H1 (cell line): ENCODE measurements at regions of chr6 and their contacts with region 1.

Region 1: DNA sequence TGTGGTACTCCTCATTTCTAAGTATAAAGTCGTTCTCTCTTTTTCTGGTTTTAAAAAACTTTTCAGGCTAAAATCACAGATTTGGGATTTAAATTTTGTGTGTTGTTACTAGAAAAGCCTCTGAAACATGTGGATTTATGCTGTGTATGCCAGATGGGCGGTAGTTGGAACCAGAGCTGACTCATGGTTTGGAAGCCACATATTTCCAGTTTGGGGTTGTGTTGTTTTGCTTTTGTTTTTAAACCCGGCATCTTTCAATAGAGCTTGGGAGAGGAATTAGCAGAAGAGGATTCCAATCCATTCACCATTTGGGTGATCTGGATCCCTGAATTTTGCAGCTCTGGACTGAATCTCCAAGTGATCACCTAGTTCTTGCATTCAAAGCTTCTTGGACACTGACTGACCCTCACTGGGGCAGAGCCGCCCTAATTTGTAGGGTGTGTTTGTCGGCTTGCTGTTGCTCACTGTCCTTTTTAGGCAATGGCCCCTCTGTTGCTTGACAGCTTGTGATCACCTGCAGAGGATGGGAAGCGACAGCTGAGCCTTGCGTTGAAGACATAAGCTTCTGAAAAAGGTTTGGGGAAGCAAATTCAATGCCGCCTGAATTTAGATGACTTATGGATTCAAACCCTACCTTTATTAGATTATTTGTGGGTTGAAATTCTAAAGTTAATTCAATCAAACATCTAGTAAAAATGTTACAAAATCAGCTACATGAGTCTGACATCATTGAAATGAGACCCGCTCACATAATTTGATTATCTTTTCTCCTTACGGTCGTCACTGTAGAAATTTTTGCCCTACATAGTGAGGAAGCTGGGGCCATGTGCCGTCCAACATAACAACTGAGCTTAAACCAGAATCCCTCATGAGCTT is 79.9 kb upstream of the CD83 start:
- DNase-seq: no peak
- H3K4me3 ChIP-seq: no peak overlapping the region
- H3K27ac ChIP-seq: no peak overlapping the region
- H3K4me1 ChIP-seq: peaks cover 2 to 11% (median 6%) of the 10 kb centered on the region in 4 experiments; a peak in 5 of 7 replicates
- H3K27me3 ChIP-seq: no peaks in the 10 kb centered on the region
- CTCF ChIP-seq: no peak
- EP300 ChIP-seq: no peak
- POLR2A ChIP-seq: no peak
- RAD21 ChIP-seq: no peak

Region 2: DNA sequence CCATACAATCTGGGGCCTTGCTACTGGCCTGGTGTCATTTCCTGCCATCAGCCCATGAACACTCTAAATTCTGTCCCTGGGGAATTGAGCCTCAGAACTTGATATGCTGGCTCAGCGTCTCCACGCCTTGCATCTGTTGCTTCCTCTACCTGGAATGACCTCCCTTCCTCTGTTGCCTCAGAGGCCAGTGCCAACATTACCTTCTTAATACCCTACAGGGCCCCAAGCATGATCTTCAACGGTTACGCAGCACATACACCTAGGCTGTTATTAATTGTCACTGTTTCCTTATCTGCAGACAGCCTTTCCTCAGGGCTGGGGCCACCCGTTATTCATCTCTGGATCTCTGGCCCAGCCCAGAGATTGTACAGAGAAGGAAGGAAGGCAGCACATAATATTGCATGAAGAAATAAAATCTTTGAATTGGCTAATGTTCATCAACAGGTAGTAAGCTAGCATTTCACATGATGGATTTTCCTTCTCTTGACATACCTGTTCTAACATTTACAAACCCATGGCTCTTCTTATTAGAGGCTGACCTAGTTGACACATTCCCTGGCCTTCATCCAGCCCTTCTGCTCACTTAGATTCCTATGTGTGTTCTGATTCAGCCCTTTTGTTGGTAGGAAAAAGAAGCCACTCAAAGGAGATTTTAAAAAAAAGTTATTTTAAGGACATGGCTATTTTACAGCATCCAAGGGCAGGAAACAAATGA is 121.3 kb before region 1 on chr6:
- CTCF ChIA-PET with region 1: interaction called, 133 read pairs
- POLR2A ChIA-PET with region 1: no interaction called
- DNase-seq: no peak
- H3K4me3 ChIP-seq: no peak overlapping the region
- H3K27ac ChIP-seq: no peak overlapping the region
- H3K4me1 ChIP-seq: peaks cover 0 to 16% (median 4%) of the 10 kb centered on the region in 4 experiments; a peak in 2 of 7 replicates
- H3K27me3 ChIP-seq: no peaks in the 10 kb centered on the region
- CTCF ChIP-seq: no peak
- EP300 ChIP-seq: no peak
- POLR2A ChIP-seq: no peak
- RAD21 ChIP-seq: no peak

Region 3: GRCh38 chr6:14089224-14089623 is 51.6 kb after region 1 on chr6:
- CTCF ChIA-PET with region 1: no interaction called
- POLR2A ChIA-PET with region 1: no interaction called
- DNase-seq: no peak
- H3K4me3 ChIP-seq: no peak overlapping the region
- H3K27ac ChIP-seq: no peak overlapping the region
- H3K4me1 ChIP-seq: peaks cover 0 to 4% (median 2%) of the 10 kb centered on the region in 4 experiments; a peak in 2 of 7 replicates
- H3K27me3 ChIP-seq: no peaks in the 10 kb centered on the region
- CTCF ChIP-seq: no peak
- EP300 ChIP-seq: no peak
- POLR2A ChIP-seq: no peak
- RAD21 ChIP-seq: no peak

Region 4: DNA sequence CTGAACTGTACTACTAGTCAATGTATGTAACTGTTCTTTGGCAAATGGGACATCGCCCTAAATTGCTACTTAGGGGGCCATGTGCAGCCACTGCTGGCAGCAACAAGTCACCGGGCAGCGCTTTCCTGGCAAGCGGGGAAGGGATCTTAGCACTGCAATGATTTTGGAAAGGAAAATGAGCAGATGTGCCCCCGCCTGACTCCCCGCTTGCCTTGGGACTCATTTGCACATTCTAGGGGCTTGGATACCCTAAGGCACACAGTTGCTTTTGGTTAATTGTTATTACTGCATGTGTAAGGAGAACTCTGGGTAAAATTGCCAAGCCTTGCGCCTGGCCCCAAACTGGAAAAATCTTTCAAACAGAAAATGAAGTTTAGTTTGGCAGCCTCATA is 112.1 kb after region 1 on chr6:
- CTCF ChIA-PET with region 1: no interaction called
- POLR2A ChIA-PET with region 1: no interaction called
- DNase-seq: no peak
- H3K4me3 ChIP-seq: no peak overlapping the region
- H3K27ac ChIP-seq: no peak overlapping the region
- H3K4me1 ChIP-seq: no peaks in the 10 kb centered on the region
- H3K27me3 ChIP-seq: no peaks in the 10 kb centered on the region; a peak in 1 of 7 replicates
- CTCF ChIP-seq: no peak
- EP300 ChIP-seq: no peak
- POLR2A ChIP-seq: no peak
- RAD21 ChIP-seq: no peak